H1 (cell line): ENCODE measurements at regions of chr1 and their contacts with region 1.

Region 1: DNA sequence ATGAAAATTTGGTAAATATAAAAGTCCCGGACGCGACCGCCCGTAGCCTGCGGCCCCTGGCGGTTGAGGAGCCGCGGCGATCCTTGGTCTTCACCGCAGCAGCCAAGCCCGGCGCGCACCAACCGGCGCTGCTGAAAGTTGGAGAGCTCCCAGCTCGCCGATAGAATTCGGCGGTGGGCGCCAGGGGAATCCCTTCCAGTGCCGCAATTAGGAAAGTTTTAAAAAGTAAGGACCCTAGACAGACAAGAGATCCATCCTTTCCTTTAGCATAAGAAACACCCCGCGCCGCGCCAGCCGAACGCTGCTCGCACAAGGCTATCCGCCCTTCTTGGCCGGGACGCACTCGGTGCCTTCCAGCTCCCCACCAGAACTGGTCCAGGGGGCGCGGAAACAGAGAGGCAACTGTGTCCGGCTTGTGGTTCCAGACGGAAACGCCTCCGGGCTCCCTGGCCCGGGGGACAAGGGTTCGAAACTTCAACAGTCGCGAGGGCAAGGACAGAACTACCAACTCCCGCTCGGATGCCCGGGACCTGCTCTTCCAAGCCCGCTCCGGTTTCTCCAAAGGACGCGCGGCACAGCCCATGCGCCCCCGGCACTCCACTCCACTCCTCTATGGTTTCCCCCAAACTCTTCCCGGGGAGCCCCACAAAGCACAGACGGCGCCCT is 1.7 kb downstream of the FAM78B start:
- DNase-seq: peak in 1 of 2 experiments; percentile 83
- H3K4me3 ChIP-seq: peak overlapping the region; percentile 55 to 76 (median 68)
- H3K27ac ChIP-seq: no peak overlapping the region
- H3K4me1 ChIP-seq: peaks cover 5 to 15% (median 9%) of the 10 kb centered on the region in 4 experiments
- H3K27me3 ChIP-seq: peaks cover 7 to 28% (median 21%) of the 10 kb centered on the region in 4 experiments
- CTCF ChIP-seq: peak; percentile 53 to 69 (median 61)
- EP300 ChIP-seq: no peak
- POLR2A ChIP-seq: no peak
- RAD21 ChIP-seq: peak; percentile 31 to 64; a peak in 3 of 4 replicates

Region 2: DNA sequence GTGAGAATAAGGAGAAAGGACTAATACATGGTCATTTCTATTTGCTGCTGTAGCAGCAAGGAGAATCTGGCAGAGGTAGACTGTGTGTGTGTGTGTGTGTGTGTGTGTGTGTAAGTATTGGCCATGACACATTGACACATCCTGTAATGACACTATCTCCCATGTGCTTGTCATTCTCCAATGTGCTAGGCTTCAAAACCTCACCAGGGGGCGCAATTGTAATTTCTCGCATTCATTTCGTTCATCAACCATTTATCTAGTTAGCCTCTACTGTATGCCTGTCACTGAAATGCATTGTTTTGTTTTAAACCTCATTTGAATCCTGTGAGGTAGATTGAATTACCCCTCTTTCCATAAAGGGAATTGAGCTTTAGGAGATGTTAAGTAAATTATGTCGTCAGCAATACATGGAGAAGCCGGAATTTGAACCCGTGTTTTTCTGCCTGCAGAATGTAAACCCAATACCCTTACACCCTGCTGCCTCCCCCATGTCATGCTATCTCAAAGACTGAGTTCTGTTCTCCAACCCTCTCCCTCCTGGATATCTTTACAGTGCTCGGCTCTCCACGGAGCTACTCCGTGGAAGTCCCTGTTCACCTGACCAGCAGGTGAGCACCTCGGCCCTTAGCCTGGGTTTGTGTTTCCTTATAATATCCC is 236.9 kb before region 1 on chr1:
- CTCF ChIA-PET with region 1: interaction called, 13 read pairs
- POLR2A ChIA-PET with region 1: no interaction called
- DNase-seq: peak in 1 of 2 experiments; percentile 70
- H3K4me3 ChIP-seq: no peak overlapping the region
- H3K27ac ChIP-seq: no peak overlapping the region
- H3K4me1 ChIP-seq: peaks cover 0 to 2% (median 0%) of the 10 kb centered on the region in 4 experiments; a peak in 1 of 7 replicates
- H3K27me3 ChIP-seq: no peaks in the 10 kb centered on the region
- CTCF ChIP-seq: peak in 2 of 3 experiments; percentile 72 to 82; a peak in 3 of 4 replicates
- EP300 ChIP-seq: no peak
- POLR2A ChIP-seq: no peak
- RAD21 ChIP-seq: peak; percentile 77

Region 3: DNA sequence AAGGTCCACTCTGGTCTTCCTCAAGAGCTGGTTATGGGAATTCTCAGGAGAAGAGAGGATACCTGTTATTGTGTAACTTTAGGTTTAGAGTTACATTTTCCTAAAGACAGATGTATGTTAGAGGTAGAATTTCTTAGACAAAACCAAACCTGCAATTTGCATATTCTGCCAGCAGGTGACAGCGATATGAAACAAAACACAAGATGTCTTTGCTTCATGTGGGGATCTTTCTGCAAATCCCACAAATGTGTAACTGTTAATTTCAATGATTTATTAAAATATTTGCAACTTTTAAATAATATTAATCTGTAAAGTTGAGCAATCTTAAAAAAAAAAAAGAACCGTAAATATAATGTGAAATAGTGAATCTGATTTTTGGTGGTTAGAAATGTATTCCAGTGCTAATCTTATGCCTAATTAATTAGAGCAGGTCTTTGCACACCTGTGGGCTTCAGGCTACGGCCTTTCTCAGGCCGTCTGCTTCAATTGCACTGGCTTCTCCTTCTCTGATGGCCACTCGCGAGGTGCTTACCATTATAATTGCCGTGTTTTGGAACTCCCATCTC is 31.8 kb before region 1 on chr1:
- CTCF ChIA-PET with region 1: interaction called, 10 read pairs
- POLR2A ChIA-PET with region 1: no interaction called
- DNase-seq: no peak
- H3K4me3 ChIP-seq: no peak overlapping the region
- H3K27ac ChIP-seq: no peak overlapping the region
- H3K4me1 ChIP-seq: no peaks in the 10 kb centered on the region
- H3K27me3 ChIP-seq: no peaks in the 10 kb centered on the region
- CTCF ChIP-seq: peak in 2 of 3 experiments; percentile 28 to 61; a peak in 2 of 4 replicates
- EP300 ChIP-seq: no peak
- POLR2A ChIP-seq: no peak
- RAD21 ChIP-seq: peak; percentile 69 to 73

Region 4: DNA sequence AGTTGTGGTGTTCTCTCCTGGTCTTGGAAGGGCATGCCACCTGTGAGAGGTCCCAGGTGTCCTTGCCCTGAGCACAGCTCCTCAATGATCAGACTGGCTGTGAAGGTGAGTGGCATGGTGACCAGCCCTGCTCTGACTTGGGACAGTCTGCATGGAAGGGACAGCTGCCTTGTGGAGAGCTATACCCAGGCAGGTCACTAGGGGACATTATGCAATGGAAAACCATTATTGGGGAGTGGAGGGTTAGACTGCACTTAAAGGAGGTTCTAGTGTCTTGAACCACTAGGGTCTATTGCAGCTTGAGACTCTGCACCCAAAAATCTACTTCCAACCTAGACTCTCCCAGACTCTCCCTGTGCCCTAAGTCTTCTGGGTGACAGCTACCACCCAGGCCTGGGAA is 23.2 kb before region 1 on chr1:
- CTCF ChIA-PET with region 1: interaction called, 16 read pairs
- POLR2A ChIA-PET with region 1: no interaction called
- DNase-seq: no peak
- H3K4me3 ChIP-seq: no peak overlapping the region
- H3K27ac ChIP-seq: no peak overlapping the region
- H3K4me1 ChIP-seq: no peaks in the 10 kb centered on the region
- H3K27me3 ChIP-seq: no peaks in the 10 kb centered on the region
- CTCF ChIP-seq: peak in 1 of 3 experiments; percentile 27; a peak in 1 of 4 replicates
- EP300 ChIP-seq: no peak
- POLR2A ChIP-seq: no peak
- RAD21 ChIP-seq: peak in 1 of 2 experiments; percentile 20; a peak in 1 of 4 replicates

Region 5: GRCh38 chr1:166184897-166185296 is 19.8 kb after region 1 on chr1:
- CTCF ChIA-PET with region 1: interaction called, 11 read pairs
- POLR2A ChIA-PET with region 1: no interaction called
- DNase-seq: no peak
- H3K4me3 ChIP-seq: no peak overlapping the region
- H3K27ac ChIP-seq: no peak overlapping the region
- H3K4me1 ChIP-seq: peaks cover 0 to 4% (median 0%) of the 10 kb centered on the region in 4 experiments; a peak in 2 of 7 replicates
- H3K27me3 ChIP-seq: no peaks in the 10 kb centered on the region
- CTCF ChIP-seq: no peak
- EP300 ChIP-seq: no peak
- POLR2A ChIP-seq: no peak
- RAD21 ChIP-seq: no peak

Region 6: DNA sequence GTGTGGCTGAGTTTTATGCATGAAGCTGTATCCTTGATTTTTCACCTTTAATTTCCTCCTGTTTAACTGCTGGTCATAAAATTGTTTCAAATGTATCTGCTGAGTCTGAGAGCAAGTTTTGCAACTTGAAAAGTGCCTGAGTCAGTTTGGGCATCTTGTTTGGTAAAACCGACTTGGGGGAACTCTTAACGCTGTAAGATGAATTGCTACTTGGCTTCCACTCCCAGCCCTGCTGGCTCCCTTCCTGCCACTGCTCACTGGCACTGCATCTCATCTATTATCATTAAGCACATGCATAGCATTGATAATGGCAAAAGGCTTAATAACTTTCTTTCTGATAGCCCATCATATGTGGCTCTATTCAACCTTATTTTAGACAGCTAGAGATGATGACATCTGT is 37.4 kb after region 1 on chr1:
- CTCF ChIA-PET with region 1: no interaction called
- POLR2A ChIA-PET with region 1: no interaction called
- DNase-seq: no peak
- H3K4me3 ChIP-seq: no peak overlapping the region
- H3K27ac ChIP-seq: no peak overlapping the region
- H3K4me1 ChIP-seq: no peaks in the 10 kb centered on the region
- H3K27me3 ChIP-seq: no peaks in the 10 kb centered on the region
- CTCF ChIP-seq: no peak
- EP300 ChIP-seq: no peak
- POLR2A ChIP-seq: no peak
- RAD21 ChIP-seq: no peak

Region 7: GRCh38 chr1:166253076-166253779 is 88.1 kb after region 1 on chr1:
- CTCF ChIA-PET with region 1: no interaction called
- POLR2A ChIA-PET with region 1: no interaction called
- DNase-seq: no peak
- H3K4me3 ChIP-seq: no peak overlapping the region
- H3K27ac ChIP-seq: no peak overlapping the region
- H3K4me1 ChIP-seq: no peaks in the 10 kb centered on the region
- H3K27me3 ChIP-seq: no peaks in the 10 kb centered on the region
- CTCF ChIP-seq: no peak
- EP300 ChIP-seq: no peak
- POLR2A ChIP-seq: no peak
- RAD21 ChIP-seq: no peak

Region 8: GRCh38 chr1:166365081-166365480 is 200.0 kb after region 1 on chr1:
- CTCF ChIA-PET with region 1: no interaction called
- POLR2A ChIA-PET with region 1: no interaction called
- DNase-seq: no peak
- H3K4me3 ChIP-seq: no peak overlapping the region
- H3K27ac ChIP-seq: no peak overlapping the region
- H3K4me1 ChIP-seq: no peaks in the 10 kb centered on the region
- H3K27me3 ChIP-seq: no peaks in the 10 kb centered on the region
- CTCF ChIP-seq: no peak
- EP300 ChIP-seq: no peak
- POLR2A ChIP-seq: no peak
- RAD21 ChIP-seq: no peak

Region 9: DNA sequence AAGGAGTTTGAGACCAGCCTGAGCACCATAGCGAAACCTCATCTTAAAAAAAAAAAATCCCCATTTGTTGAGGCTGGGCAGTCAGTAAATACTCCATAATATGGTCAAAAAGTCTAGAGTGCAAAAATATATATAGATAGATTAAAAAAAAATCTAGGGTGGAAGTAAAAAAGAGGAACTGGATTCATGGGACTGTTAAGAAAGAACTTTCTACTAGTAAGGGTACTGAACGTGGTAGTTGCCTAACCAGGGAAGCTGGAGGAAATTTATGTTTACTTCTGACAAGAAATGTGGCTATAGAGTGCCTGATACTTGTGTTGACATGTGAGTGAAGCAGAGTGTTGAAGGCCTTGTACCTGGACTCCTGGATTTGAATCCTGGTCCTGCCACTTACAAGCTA is 267.5 kb after region 1 on chr1:
- CTCF ChIA-PET with region 1: interaction called, 11 read pairs
- POLR2A ChIA-PET with region 1: no interaction called
- DNase-seq: no peak
- H3K4me3 ChIP-seq: no peak overlapping the region
- H3K27ac ChIP-seq: no peak overlapping the region
- H3K4me1 ChIP-seq: no peaks in the 10 kb centered on the region
- H3K27me3 ChIP-seq: no peaks in the 10 kb centered on the region
- CTCF ChIP-seq: no peak
- EP300 ChIP-seq: no peak
- POLR2A ChIP-seq: no peak
- RAD21 ChIP-seq: no peak